ENCODE measurements at regions of chr5 and their contacts with region 1.

Region 1: DNA sequence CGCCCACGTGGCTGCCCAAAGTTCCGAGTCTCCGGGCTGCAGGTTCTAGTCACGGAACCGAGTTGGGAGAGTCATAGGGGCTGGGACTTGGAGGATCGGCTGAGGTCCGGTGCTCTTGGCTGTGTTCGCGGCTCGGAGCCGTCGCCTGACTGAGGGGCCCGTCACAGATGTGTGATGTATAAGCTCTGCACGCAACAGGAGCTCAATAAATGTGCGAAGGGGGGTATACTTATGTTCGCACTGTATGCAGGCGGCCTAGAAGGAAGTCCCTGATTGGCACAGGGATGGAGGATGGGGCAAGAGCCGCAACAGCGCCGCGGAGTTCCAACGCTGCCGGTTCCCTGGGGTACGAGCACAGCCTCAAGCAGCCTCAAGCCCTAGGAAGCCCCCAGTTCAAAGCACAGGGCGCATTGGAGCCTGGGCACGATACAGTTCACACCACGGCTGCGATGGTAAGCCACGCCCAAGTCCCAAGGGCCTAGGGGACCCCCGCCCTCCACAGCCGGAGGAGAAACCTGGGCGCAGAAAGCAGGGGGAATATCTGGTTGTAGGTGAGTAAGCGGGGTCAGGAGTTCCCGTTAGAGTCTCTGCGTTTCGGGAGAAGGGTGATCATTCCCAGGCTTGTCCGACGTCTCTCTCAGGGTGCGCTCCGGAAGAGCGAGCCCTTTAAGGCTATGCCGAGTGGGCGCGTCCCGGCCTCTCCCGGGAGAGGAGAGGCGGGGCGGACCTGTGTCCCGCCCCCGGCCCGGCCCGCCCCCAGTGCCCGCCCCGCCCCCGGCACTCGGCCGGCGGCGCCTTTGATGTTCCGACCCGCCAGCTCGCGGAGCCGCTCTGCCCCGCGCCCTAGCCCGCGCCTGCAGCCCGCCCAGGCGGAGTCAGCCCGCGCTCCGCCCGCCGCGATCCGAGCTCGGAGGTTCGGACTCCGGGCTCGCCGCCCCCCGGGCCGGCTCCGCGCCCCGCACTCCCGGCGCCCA is at the start of gene TCF7:
- DNase-seq: peak; percentile 92
- H3K4me3 Mint-ChIP-seq: peak within 1 kb of the TSS; percentile 87
- H3K27ac Mint-ChIP-seq: peak within 1 kb of the TSS; percentile 89
- H3K4me1 Mint-ChIP-seq: peaks cover 63% of the 10 kb centered on the region
- H3K27me3 Mint-ChIP-seq: peaks cover 12% of the 10 kb centered on the region
- total RNA-seq, gene TCF7: 112 and 113 TPM in 2 replicates

Region 2: DNA sequence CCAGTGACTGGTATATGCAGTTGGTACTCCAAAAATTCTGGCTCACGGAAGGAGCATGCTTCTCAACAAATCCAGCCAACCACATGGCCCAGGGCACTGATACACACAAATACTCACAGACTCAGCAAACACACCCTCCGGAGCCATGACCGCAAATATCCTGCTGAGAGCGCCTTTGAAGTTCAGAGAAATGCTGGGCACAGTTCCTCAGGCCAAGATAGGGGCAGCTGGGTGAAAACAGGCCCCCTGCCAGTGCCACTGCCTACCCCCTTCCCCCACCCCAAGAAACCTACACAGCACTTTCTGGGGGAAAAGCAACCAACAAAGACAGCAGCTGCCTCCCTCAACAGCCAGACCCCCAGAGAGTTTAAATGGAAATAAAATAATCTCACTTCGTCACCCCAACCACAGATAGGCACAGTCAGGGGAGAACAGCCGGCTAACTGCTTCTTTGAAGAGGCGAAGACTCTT is 265.8 kb before region 1 on chr5:
- intact Hi-C with region 1: no loop called
- DNase-seq: no peak
- H3K4me3 Mint-ChIP-seq: no peak overlapping the region
- H3K27ac Mint-ChIP-seq: peak overlapping the region; percentile 41
- H3K4me1 Mint-ChIP-seq: peaks cover 7% of the 10 kb centered on the region
- H3K27me3 Mint-ChIP-seq: peaks cover 6% of the 10 kb centered on the region

Region 3: DNA sequence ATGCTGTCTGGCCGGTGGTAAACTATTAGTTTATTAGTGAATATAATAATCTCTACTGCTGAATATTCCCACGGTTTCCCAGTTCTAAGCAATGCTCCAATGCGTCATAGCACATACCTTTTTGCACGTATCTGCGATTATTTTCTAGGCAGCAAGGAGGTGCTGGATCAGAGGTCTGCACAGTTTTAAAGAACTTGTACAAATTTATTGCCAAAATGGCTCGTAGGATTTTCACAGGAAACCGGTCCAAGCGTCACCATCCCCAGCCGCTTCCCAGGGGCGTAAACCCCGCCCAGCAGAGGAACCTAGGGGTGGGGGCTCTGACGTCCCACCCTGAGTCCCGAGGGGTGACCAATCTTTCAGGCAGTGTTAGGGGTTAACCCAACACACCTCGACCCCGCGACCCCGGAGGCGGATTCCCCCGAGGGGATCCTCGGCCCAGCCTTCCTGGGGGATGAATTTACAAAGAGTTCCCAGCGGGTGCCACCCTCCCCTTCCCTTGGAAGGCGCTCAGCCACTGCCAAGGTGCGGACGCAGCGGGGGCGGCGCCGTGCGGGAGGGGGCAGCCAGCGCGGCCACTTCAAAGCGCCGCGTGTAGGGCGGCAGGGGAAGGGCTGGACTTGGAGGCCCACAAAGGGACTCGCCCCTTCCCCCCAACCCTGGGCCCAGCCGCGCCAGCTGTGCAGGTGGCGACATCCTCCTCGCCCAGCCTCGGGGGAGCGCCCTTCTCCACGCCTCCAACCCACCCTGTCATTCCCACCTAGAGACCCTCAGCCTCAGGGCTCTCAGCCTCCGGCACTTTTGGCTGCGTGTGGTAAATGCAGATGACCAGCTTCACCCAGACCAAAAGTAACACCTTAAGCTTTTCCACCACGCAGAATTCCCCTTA is 43.2 kb before region 1 on chr5:
- intact Hi-C with region 1: loop called (anchors 1 kb)
- DNase-seq: peak; percentile 78
- H3K4me3 Mint-ChIP-seq: peak overlapping the region; percentile 83
- H3K27ac Mint-ChIP-seq: peak overlapping the region; percentile 95
- H3K4me1 Mint-ChIP-seq: peaks cover 57% of the 10 kb centered on the region
- H3K27me3 Mint-ChIP-seq: peaks cover 3% of the 10 kb centered on the region

Region 4: GRCh38 chr5:134086943-134087305 is 27.3 kb before region 1 on chr5:
- intact Hi-C with region 1: loop called (anchors 1 kb)
- DNase-seq: peak; percentile 94
- H3K4me3 Mint-ChIP-seq: peak overlapping the region; percentile 65
- H3K27ac Mint-ChIP-seq: peak overlapping the region; percentile 95
- H3K4me1 Mint-ChIP-seq: peaks cover 68% of the 10 kb centered on the region
- H3K27me3 Mint-ChIP-seq: peaks cover 4% of the 10 kb centered on the region

Region 5: DNA sequence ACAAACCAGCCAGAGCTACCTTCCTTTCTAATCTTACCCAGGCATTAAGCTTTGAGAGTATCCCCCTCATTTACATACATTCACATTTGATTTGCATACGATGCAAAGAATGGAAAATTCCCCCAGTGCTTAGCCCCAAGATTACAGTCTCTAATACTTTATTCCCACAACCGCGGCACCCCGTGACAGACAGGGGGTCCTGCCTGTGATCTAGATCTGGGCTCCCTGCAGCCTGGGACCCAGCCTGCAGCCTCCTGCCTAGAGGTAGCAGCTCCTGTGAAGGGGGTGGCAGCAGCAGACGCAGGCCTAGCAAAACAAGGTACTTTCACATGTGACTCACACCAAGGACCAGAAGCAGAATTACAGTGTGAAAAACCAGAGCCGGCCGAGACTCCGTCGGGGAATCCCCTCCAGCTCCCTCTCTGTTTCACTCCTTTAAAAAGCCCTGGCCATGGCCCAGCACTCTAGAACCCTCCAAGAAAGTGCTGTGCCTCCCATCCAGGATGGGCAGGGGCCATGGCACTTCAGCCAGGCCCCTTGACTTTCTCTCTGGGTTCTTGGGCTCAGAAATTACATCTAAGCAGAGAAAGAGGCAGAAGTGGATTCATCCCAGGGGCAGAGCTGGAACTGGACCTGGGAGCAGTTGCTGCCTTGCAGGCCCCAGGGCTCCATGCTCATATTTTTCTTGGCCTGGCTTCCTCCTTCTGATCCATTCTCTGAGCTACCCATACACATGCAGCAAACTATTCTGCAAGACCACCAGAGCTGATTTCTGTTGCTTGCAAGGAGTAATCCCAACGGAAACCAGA is 13.7 kb before region 1 on chr5:
- intact Hi-C with region 1: loop called (anchors 1 kb)
- DNase-seq: peak; percentile 94
- H3K4me3 Mint-ChIP-seq: peak overlapping the region; percentile 59
- H3K27ac Mint-ChIP-seq: peak overlapping the region; percentile 90
- H3K4me1 Mint-ChIP-seq: peaks cover 58% of the 10 kb centered on the region
- H3K27me3 Mint-ChIP-seq: peaks cover 3% of the 10 kb centered on the region

Region 6: DNA sequence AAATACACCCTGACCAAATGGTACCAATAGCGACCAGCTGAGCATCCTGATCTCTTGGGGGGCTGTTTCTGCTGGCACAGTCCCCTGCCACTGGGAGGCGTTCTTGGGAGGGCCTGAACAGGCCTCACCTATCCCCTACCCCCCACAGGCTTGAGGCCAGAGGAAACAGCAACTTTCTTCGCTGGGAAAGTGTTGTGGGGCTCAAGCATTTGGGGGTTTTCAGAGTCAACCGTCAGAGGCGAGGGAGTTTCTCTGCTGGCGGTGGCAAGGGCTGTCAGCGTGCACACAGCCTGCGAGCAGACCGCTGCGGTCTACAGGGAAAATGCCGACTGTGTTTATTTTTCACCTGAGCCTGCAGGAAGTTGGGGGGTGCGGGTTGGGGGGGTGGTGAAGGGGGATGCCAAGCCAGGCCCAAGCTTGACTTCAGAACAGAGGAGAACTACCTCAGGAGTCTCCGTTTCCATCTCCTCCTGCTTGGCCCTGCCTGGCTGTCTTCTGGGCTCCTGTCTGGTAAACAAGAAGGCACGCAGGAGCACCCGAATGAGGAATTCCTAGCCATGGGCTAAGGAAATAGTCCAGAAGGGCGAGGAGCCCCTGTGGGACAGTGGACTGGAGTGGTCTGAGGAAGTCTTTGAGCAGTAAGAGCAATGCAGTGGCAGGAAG is 18.3 kb after region 1 on chr5:
- intact Hi-C with region 1: loop called (anchors 1 kb)
- DNase-seq: peak; percentile 93
- H3K4me3 Mint-ChIP-seq: peak overlapping the region; percentile 79
- H3K27ac Mint-ChIP-seq: peak overlapping the region; percentile 91
- H3K4me1 Mint-ChIP-seq: peaks cover 88% of the 10 kb centered on the region
- H3K27me3 Mint-ChIP-seq: peaks cover 8% of the 10 kb centered on the region

Region 7: GRCh38 chr5:134263801-134264200 is 149.6 kb after region 1 on chr5:
- intact Hi-C with region 1: no loop called
- DNase-seq: no peak
- H3K4me3 Mint-ChIP-seq: no peak overlapping the region
- H3K27ac Mint-ChIP-seq: no peak overlapping the region
- H3K4me1 Mint-ChIP-seq: no peaks in the 10 kb centered on the region
- H3K27me3 Mint-ChIP-seq: peaks cover 14% of the 10 kb centered on the region